HEK293 (cell line): ENCODE measurements at regions of chr9 and their contacts with region 1.

Region 1: GRCh38 chr9:78691542-78691941 is 394.6 kb downstream of the PSAT1 start:
- H3K4me3 ChIP-seq: no peak overlapping the region
- H3K27ac ChIP-seq: no peak overlapping the region
- H3K4me1 ChIP-seq: no peaks in the 10 kb centered on the region
- CTCF ChIP-seq: no peak

Region 2: GRCh38 chr9:78590068-78590467 is 101.5 kb before region 1 on chr9:
- CTCF ChIA-PET with region 1: no interaction called
- POLR2A ChIA-PET with region 1: interaction called, 10 read pairs
- H3K4me3 ChIP-seq: no peak overlapping the region
- H3K27ac ChIP-seq: no peak overlapping the region
- H3K4me1 ChIP-seq: no peaks in the 10 kb centered on the region
- CTCF ChIP-seq: no peak

Region 3: GRCh38 chr9:78756813-78757510 is 65.4 kb after region 1 on chr9:
- CTCF ChIA-PET with region 1: no interaction called
- POLR2A ChIA-PET with region 1: no interaction called
- H3K4me3 ChIP-seq: no peak overlapping the region
- H3K27ac ChIP-seq: no peak overlapping the region
- H3K4me1 ChIP-seq: no peaks in the 10 kb centered on the region
- CTCF ChIP-seq: no peak